HepG2 (cell line): ENCODE measurements at regions of chr19 and their contacts with region 1.

Region 1: GRCh38 chr19:14517840-14518505 is at the start of gene DNAJB1:
- DNase-seq: peak; percentile 38
- ATAC-seq: peak; percentile 61
- H3K4me3 ChIP-seq: peak within 1 kb of the TSS; percentile 91 to 98 (median 92)
- H3K27ac ChIP-seq: peak within 1 kb of the TSS; percentile 97
- H3K4me1 ChIP-seq: peaks cover 79% of the 10 kb centered on the region
- H3K27me3 ChIP-seq: no peaks in the 10 kb centered on the region; a peak in 1 of 5 replicates
- CTCF ChIP-seq: 0 out of 2 replicates have a peak, but pooled peaks have one; percentile 7
- EP300 ChIP-seq: no peak
- POLR2A ChIP-seq: peak; percentile 94 to 98
- RAD21 ChIP-seq: peak; percentile 63; the same call in 1 of the 2 replicates
- total RNA-seq, gene DNAJB1: 87.5 and 101 TPM in 2 replicates

Region 2: DNA sequence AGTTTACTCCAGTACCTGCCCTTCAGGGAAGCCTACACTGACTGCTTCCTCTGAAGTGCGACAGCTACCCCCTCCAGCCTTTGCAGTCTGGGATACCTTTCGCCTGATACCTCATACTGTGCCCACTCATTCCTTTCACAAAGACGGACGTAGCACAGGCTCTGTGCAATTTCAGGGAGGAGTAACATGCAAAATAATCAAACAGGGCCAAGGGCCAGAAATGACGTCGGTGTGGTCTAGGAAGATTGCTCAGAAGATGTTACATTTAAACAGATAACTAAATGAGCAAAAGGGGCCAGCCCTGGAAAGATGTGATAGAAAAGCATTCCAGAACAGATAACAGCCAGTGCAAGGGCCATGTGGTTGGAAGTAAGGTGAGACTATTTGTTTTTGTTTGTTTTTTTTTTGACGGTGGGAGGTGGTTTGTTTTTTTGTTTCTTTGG is 92.3 kb before region 1 on chr19:
- CTCF ChIA-PET with region 1: no interaction called
- POLR2A ChIA-PET with region 1: no interaction called
- in situ Hi-C with region 1: no loop called
- intact Hi-C with region 1: no loop called
- DNase-seq: no peak
- ATAC-seq: peak; percentile 60
- H3K4me3 ChIP-seq: no peak overlapping the region
- H3K27ac ChIP-seq: no peak overlapping the region
- H3K4me1 ChIP-seq: peaks cover 18% of the 10 kb centered on the region
- H3K27me3 ChIP-seq: no peaks in the 10 kb centered on the region
- CTCF ChIP-seq: no peak
- EP300 ChIP-seq: no peak
- POLR2A ChIP-seq: no peak
- RAD21 ChIP-seq: no peak

Region 3: GRCh38 chr19:14496028-14496833 is 21.7 kb before region 1 on chr19 and contains the start of gene GIPC1:
- CTCF ChIA-PET with region 1: no interaction called
- POLR2A ChIA-PET with region 1: interaction called, 123 read pairs
- in situ Hi-C with region 1: no loop called
- intact Hi-C with region 1: no loop called
- DNase-seq: peak; percentile 96
- ATAC-seq: peak; percentile 85
- H3K4me3 ChIP-seq: peak within 1 kb of the TSS; percentile 84 to 88 (median 87)
- H3K27ac ChIP-seq: peak within 1 kb of the TSS; percentile 45
- H3K4me1 ChIP-seq: peaks cover 37% of the 10 kb centered on the region
- H3K27me3 ChIP-seq: no peaks in the 10 kb centered on the region
- CTCF ChIP-seq: no peak
- EP300 ChIP-seq: peak; percentile 17 to 59; a peak in 3 of 4 replicates
- POLR2A ChIP-seq: peak in 1 of 2 experiments; percentile 34; a peak in 1 of 4 replicates
- RAD21 ChIP-seq: 0 out of 2 replicates have a peak, but pooled peaks have one; percentile 44
- total RNA-seq, gene GIPC1: 44.3 and 48.1 TPM in 2 replicates

Region 4: DNA sequence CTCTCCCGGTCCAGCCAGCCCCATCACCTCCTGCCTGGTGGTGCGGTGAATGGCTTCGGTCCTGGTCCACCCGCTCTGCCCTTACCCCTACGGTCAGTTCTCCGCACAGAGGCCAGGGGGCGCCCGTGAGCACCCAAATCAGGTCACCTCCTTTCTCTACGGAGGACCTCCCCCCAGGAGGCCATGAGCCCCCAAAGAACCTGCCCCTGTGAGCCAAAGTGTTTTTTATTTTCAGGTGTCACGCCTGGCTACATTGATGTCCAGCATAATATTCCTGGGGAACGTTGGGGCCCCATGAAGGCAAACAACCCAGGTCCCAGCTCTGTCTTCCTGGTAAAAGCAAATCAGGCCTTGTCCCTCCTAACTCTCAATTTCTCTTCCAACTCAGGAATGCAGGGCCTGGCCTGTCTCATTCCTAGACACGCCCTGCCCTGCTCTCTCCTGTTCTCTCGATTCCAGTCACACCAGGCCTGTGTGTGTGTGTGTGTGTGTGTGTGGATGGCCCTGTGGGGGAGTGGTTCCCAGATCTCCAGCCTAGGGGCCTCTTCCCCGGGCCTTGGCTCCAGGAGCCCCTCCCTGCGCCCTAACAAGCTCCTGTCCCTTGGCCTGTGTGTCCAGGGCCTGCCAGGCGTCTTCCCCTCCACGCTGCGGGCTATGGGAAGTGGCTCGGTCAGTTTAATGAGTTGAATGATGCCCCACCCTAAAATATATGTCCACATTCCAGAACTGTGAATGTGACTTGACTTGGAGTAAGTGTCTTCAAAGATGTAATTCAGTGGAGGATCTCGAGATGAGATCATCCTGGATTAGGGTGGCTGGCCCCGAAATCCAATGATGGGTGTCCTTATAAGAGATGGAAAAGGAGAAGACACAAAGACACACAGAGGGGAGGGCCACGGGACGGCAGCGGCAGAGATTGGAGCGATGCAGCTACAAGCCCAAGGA is 12.2 kb before region 1 on chr19:
- CTCF ChIA-PET with region 1: no interaction called
- POLR2A ChIA-PET with region 1: interaction called, 123 read pairs
- in situ Hi-C with region 1: no loop called
- intact Hi-C with region 1: no loop called
- DNase-seq: peak; percentile 64
- ATAC-seq: peak; percentile 83
- H3K4me3 ChIP-seq: peak overlapping the region; percentile 43 to 66 (median 50)
- H3K27ac ChIP-seq: peak overlapping the region; percentile 41
- H3K4me1 ChIP-seq: peaks cover 85% of the 10 kb centered on the region
- H3K27me3 ChIP-seq: no peaks in the 10 kb centered on the region
- CTCF ChIP-seq: peak; percentile 88
- EP300 ChIP-seq: no peak
- POLR2A ChIP-seq: no peak
- RAD21 ChIP-seq: peak; percentile 53; the same call in 1 of the 2 replicates

Region 5: DNA sequence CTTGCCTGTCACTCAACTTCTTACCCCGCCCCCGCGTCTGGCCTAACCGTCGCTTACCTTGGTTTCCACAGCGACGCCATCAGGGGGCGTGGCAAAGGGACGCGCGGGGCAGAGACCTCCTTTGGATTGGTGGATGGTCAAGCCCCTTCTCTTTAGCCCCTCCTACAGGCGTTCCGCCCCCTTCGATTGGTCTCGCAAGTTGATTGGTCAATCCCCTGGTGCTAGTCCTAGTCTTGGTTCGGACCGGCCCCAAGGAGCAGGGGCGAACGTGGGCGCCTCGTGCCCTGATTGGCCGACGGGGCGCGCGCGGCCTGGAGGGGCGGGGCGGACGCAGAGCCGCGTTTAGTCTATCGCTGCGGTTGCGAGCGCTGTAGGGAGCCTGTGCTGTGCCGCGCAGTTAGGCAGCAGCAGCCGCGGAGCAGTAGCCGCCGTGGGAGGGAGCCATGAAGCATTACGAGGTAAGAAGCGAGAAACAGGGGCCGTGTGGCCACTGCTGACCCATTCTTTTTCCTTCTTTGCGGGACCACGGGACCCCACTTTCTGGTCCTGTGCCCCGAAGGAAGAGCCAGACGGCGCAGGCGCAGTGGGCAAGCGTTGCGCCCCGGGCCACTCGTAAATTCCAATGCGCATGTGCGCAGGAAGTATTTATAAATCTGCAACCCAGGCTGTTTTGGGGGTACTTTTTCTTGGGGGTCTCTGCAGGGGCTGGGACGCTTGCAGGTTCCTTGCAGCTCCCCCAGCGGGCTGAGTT is 11.5 kb after region 1 on chr19 and contains the start of gene TECR:
- CTCF ChIA-PET with region 1: no interaction called
- POLR2A ChIA-PET with region 1: interaction called, 39 read pairs
- in situ Hi-C with region 1: no loop called
- intact Hi-C with region 1: loop called (anchors 1 kb)
- DNase-seq: peak; percentile 99
- ATAC-seq: peak; percentile 98
- H3K4me3 ChIP-seq: peak within 1 kb of the TSS; percentile 78 to 89 (median 85)
- H3K27ac ChIP-seq: peak within 1 kb of the TSS; percentile 82
- H3K4me1 ChIP-seq: peaks cover 28% of the 10 kb centered on the region
- H3K27me3 ChIP-seq: no peaks in the 10 kb centered on the region; a peak in 1 of 5 replicates
- CTCF ChIP-seq: 0 out of 2 replicates have a peak, but pooled peaks have one; percentile 12
- EP300 ChIP-seq: no peak; a peak in 1 of 4 replicates
- POLR2A ChIP-seq: peak; percentile 97 to 99
- RAD21 ChIP-seq: peak; percentile 63; the same call in 1 of the 2 replicates
- total RNA-seq, gene TECR: 25.9 and 54.9 TPM in 2 replicates

Region 6: GRCh38 chr19:14536926-14537692 is 19.1 kb after region 1 on chr19:
- CTCF ChIA-PET with region 1: no interaction called
- POLR2A ChIA-PET with region 1: interaction called, 36 read pairs
- in situ Hi-C with region 1: no loop called
- intact Hi-C with region 1: no loop called
- DNase-seq: no peak
- ATAC-seq: no peak; the same call in 2 of the 3 replicates
- H3K4me3 ChIP-seq: no peak overlapping the region
- H3K27ac ChIP-seq: no peak overlapping the region
- H3K4me1 ChIP-seq: peaks cover 25% of the 10 kb centered on the region
- H3K27me3 ChIP-seq: no peaks in the 10 kb centered on the region; a peak in 1 of 5 replicates
- CTCF ChIP-seq: no peak
- EP300 ChIP-seq: no peak
- POLR2A ChIP-seq: no peak
- RAD21 ChIP-seq: no peak

Region 7: DNA sequence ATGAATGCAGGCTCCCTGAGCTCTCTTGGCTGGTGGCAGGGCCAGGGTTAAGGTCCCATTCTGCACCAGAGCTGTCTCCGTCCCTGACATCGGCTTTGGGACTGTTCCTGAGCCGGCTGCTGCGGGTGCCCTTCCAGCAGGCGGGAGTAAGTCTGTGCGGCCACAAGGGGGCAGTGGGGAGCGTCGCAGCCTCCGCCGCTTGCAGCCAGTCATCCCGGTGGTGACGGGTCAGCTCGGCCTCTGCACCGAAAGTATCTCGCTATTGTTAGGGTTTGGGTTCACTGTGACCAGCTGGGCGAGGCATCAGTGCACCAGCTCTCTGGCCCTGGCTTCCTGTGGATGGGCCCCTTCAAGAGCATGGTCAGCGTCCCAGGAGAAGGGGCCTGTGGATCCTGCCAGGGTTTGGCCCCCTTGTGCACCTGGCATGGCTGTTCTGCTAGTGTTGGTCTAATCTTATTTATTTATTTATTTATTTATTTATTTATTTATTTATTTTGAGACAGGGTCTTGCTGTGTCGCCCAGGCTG is 38.8 kb after region 1 on chr19:
- CTCF ChIA-PET with region 1: no interaction called
- POLR2A ChIA-PET with region 1: interaction called, 18 read pairs
- in situ Hi-C with region 1: no loop called
- intact Hi-C with region 1: loop called (anchors 1 kb)
- DNase-seq: peak; percentile 61
- ATAC-seq: peak; percentile 62
- H3K4me3 ChIP-seq: peak overlapping the region in 1 of 3 experiments; percentile 48; a peak in 2 of 6 replicates
- H3K27ac ChIP-seq: no peak overlapping the region
- H3K4me1 ChIP-seq: peaks cover 43% of the 10 kb centered on the region
- H3K27me3 ChIP-seq: no peaks in the 10 kb centered on the region
- CTCF ChIP-seq: peak; percentile 94
- EP300 ChIP-seq: no peak
- POLR2A ChIP-seq: no peak
- RAD21 ChIP-seq: peak; percentile 64

Region 8: DNA sequence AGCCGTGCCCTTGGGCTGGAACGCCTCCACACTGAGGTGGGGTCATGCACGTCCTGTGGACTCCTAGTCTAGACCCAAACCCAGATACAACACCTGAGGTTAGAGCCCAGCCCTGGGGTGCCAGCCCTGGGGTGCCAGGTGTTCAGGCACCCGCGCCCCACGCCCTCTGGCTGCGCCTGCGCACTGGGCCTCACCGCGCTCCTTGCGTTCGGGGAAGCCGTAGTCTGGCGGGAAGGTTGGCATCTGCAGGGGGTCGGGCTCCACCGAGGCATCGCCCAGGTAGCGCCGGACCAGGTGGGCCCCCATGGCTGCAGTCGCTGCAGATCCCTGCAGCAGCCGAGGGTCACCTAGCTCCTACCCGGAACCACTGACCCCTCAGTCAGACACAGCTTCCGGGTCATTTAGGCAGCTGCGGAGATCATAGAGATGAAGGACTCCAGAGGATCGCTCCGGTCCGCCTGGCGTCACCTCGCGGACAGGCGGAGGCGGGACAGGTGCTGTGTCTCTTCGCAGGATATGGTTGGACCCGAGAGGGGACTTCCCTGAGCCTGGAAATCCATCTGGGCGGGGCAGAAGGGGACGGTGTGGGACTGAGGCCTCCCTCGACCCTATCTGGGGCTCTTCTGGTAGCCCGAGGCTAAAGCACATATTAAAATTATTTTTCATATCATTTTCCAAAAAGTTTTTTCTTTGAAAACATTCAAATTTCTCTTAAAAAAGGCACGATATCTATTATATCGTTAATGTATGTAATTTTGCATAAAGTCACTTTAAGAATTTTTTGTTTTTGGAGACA is 53.9 kb after region 1 on chr19 and contains the start of gene NDUFB7:
- CTCF ChIA-PET with region 1: no interaction called
- POLR2A ChIA-PET with region 1: interaction called, 11 read pairs
- in situ Hi-C with region 1: no loop called
- intact Hi-C with region 1: no loop called
- DNase-seq: peak; percentile 92
- ATAC-seq: peak; percentile 95
- H3K4me3 ChIP-seq: peak within 1 kb of the TSS; percentile 81 to 99 (median 94)
- H3K27ac ChIP-seq: peak within 1 kb of the TSS; percentile 54
- H3K4me1 ChIP-seq: peaks cover 50% of the 10 kb centered on the region
- H3K27me3 ChIP-seq: no peaks in the 10 kb centered on the region; a peak in 1 of 5 replicates
- CTCF ChIP-seq: peak; percentile 97
- EP300 ChIP-seq: peak in 1 of 2 experiments; percentile 44; a peak in 1 of 4 replicates
- POLR2A ChIP-seq: peak; percentile 85 to 91
- RAD21 ChIP-seq: peak; percentile 33; the same call in 1 of the 2 replicates
- total RNA-seq, gene NDUFB7: 198 and 244 TPM in 2 replicates

Region 9: DNA sequence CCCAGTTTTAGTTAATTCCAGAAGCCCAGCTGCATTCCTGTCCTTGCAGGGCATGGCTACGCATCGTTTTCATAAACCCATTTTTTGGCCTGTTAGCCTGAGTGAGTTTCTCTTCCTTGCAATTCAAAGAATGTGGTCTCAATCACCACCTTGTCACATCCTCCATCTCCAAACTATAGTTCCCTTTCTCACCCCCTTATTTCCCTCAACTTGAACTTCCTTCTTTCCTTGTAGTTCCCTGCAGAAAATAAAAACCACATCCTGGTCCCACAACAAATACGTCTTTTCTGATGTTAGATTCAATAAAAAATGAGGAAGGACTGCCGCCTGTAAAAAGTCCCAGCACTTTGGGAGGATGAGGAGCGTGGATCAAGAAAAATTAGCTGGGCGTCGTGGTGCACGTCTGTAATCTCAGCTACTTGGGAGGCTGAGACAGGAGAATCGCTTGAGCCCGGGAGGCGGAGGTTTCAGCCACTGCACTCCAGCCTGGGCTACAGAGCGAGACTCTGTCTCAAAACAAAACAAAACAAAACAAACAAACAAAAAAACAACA is 143.5 kb after region 1 on chr19:
- CTCF ChIA-PET with region 1: no interaction called
- POLR2A ChIA-PET with region 1: no interaction called
- in situ Hi-C with region 1: no loop called
- intact Hi-C with region 1: no loop called
- DNase-seq: no peak
- ATAC-seq: no peak
- H3K4me3 ChIP-seq: no peak overlapping the region
- H3K27ac ChIP-seq: no peak overlapping the region
- H3K4me1 ChIP-seq: 0 out of 2 replicates have a peak, but pooled peaks cover 13% of the 10 kb centered on the region
- H3K27me3 ChIP-seq: no peaks in the 10 kb centered on the region
- CTCF ChIP-seq: no peak
- EP300 ChIP-seq: no peak
- POLR2A ChIP-seq: no peak
- RAD21 ChIP-seq: no peak